ENCODE measurements at regions of chr19 and their contacts with region 1.

Region 1: DNA sequence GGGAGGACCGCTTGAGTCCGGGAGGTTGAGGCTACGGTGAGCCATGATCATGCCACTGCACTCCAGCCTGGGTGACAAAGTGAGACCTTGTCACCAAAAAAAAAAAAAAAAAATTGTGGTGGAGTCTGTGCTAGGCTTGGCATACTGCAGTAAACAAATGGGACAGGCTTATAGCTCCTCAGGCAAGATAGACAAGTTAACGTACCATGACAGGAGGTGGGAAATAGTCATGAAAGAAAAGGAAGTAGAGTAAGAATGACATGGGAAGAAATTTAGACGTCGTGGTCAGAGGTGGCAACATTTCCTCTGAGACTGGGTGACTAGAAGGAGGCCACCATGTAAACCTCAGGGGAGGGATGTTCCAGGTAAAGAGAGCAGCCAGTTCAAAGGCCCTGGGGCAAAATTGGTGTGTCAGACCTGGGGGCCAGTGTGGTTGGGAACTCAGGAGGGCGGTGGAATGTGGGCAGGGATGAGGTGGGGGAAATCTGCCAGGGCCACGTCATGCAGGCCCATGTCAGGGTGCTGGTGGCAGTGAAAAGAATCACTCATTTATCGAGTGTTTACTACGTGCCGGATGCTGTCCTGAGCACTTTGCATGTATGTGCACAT is 5.6 kb downstream of the SNRPA start:
- DNase-seq: no peak
- H3K4me3 ChIP-seq: no peak overlapping the region
- H3K27ac ChIP-seq: no peak overlapping the region
- H3K4me1 ChIP-seq: peaks cover 23% of the 10 kb centered on the region
- H3K27me3 ChIP-seq: no peaks in the 10 kb centered on the region
- CTCF ChIP-seq: no peak

Region 2: GRCh38 chr19:40598121-40598917 is 158.3 kb before region 1 on chr19:
- CTCF ChIA-PET with region 1: no interaction called
- POLR2A ChIA-PET with region 1: no interaction called
- intact Hi-C with region 1: no loop called
- DNase-seq: peak; percentile 60 to 89
- H3K4me3 ChIP-seq: no peak overlapping the region
- H3K27ac ChIP-seq: no peak overlapping the region
- H3K4me1 ChIP-seq: peaks cover 32% of the 10 kb centered on the region
- H3K27me3 ChIP-seq: peaks cover 35% of the 10 kb centered on the region
- CTCF ChIP-seq: peak; percentile 96

Region 3: DNA sequence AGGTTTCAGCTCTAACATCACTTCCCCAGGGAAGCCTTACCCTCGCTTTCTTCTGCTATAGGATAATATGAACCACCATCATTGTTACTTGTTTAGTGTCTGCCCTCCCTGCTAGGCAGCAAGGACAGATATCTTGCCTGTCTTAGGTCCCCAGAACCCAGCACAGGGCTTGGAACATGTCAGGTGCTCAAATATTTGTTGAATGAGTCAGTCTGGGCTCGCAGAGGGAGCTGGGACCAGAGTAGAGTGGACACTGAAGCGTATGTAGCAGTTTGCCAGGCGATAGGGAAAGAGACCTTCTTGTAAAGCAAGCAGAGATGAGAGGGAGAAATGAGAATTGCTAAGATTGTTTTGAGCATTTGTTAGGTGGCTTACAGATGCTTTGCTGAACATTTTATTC is 652.7 kb after region 1 on chr19:
- CTCF ChIA-PET with region 1: no interaction called
- POLR2A ChIA-PET with region 1: interaction called, 37 read pairs
- intact Hi-C with region 1: no loop called
- DNase-seq: peak; percentile 67 to 72
- H3K4me3 ChIP-seq: no peak overlapping the region
- H3K27ac ChIP-seq: no peak overlapping the region
- H3K4me1 ChIP-seq: peaks cover 9% of the 10 kb centered on the region
- H3K27me3 ChIP-seq: no peaks in the 10 kb centered on the region
- CTCF ChIP-seq: no peak

Measured in PC-9 (cell line).